ENCODE measurements at regions of chr7 and their contacts with region 1.

Region 1: DNA sequence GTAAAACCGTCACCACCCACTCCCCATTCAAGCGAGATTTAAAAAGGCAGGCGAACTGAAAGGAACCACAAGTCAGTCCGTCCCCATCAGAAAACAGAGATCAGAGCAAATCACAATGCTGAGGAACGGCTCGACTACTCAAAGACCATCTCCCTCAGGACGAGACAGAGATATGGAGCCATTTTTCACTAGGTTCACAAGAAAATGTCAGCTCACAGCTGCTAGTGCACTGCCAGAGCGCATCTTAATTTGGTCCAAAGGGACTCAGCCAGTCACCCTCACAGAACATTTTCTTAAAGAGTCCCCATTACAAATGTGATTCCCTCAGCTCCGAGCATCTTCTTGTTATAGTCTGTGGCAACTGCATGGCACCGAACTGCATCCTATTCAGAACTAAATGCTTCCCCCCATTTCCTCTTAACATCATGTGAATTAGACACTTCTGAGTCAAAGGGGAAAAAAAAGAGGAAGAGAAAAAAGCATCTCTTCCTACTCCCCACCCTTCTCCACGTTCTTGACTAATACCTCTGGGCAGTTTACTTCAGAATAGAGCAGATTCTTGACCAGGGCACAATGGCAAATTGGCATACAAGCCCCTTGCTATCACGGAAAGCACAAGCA is 683.9 kb downstream of the MAGI2 start:
- DNase-seq: no peak
- ATAC-seq: peak in 2 of 4 donors; percentile 24 to 48
- H3K4me3 ChIP-seq: peak overlapping the region; percentile 68
- H3K27ac ChIP-seq: peak overlapping the region; percentile 55
- H3K4me1 ChIP-seq: peaks cover 9% of the 10 kb centered on the region
- H3K27me3 ChIP-seq: no peaks in the 10 kb centered on the region
- CTCF ChIP-seq: no peak

Region 2: GRCh38 chr7:78607099-78607498 is 162.5 kb before region 1 on chr7:
- intact Hi-C with region 1: loop called in 1 of 2 experiments (anchors 10 kb)
- DNase-seq: no peak
- ATAC-seq: no peak
- H3K4me3 ChIP-seq: no peak overlapping the region
- H3K27ac ChIP-seq: no peak overlapping the region
- H3K4me1 ChIP-seq: no peaks in the 10 kb centered on the region
- H3K27me3 ChIP-seq: no peaks in the 10 kb centered on the region
- CTCF ChIP-seq: no peak

Region 3: DNA sequence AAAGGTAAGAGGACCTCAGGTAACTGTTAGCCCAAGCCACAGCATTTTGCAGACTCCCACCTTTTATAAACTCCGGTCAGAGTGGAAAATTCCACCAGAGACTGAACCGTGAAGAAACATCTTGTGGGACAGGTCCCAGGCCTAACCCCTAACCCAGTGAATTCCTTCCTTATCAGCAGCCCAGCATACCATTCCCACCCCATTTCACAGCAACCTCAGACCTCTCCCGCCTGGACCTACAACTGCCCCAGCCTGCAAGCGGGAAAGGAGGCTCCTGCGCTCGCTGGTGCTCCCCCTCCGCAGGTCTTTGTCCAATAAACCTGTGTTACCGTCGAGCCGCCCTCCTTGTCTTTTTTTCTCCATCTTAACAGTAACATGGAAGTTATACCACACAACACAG is 52.7 kb before region 1 on chr7:
- intact Hi-C with region 1: loop called in 1 of 2 experiments (anchors 5 kb)
- DNase-seq: no peak
- ATAC-seq: no peak
- H3K4me3 ChIP-seq: no peak overlapping the region
- H3K27ac ChIP-seq: no peak overlapping the region
- H3K4me1 ChIP-seq: peaks cover 28% of the 10 kb centered on the region
- H3K27me3 ChIP-seq: no peaks in the 10 kb centered on the region
- CTCF ChIP-seq: no peak

Region 4: GRCh38 chr7:78828317-78828716 is 58.7 kb after region 1 on chr7:
- intact Hi-C with region 1: no loop called
- DNase-seq: no peak
- ATAC-seq: no peak
- H3K4me3 ChIP-seq: no peak overlapping the region
- H3K27ac ChIP-seq: no peak overlapping the region
- H3K4me1 ChIP-seq: no peaks in the 10 kb centered on the region
- H3K27me3 ChIP-seq: no peaks in the 10 kb centered on the region
- CTCF ChIP-seq: no peak

Measured in psoas muscle (tissue), 8 donors.